Mammary epithelial cell (primary cell): ENCODE measurements at regions of chr9 and their contacts with region 1.

Region 1: DNA sequence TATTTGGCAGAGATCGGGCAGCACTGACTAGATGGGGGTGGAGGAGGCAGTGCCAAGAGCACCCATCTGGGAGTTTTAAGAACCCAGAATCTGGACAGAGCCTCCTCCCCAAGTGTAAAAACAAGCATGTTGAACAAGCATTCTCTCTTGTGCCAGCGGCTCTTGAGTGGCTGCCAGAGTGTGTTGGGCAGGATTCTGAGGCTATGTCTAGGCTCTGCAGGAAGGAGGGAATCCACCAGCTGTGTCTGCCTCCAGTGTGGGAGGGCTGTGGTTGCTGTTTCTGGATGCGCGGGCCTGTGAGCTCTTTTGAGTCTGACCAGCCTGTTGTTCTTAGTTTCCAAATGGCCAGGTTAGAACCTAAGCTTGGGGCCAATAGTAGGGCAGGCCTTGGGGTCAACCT is 39.8 kb downstream of the HMCN2 start:
- DNase-seq: no peak
- H3K4me3 ChIP-seq: no peak overlapping the region
- H3K27ac ChIP-seq: no peak overlapping the region
- H3K4me1 ChIP-seq: no peaks in the 10 kb centered on the region
- H3K27me3 ChIP-seq: no peaks in the 10 kb centered on the region
- CTCF ChIP-seq: no peak

Region 2: GRCh38 chr9:129868916-129869486 is 436.4 kb before region 1 on chr9:
- CTCF ChIA-PET with region 1: no interaction called
- dilution Hi-C with region 1: no loop called
- in situ Hi-C with region 1: no loop called
- intact Hi-C with region 1: no loop called
- DNase-seq: no peak
- H3K4me3 ChIP-seq: no peak overlapping the region
- H3K27ac ChIP-seq: no peak overlapping the region
- H3K4me1 ChIP-seq: no peaks in the 10 kb centered on the region
- H3K27me3 ChIP-seq: no peaks in the 10 kb centered on the region
- CTCF ChIP-seq: no peak

Region 3: GRCh38 chr9:130352081-130352480 is 46.7 kb after region 1 on chr9:
- CTCF ChIA-PET with region 1: no interaction called
- dilution Hi-C with region 1: loop called (anchors 5 kb)
- in situ Hi-C with region 1: no loop called
- intact Hi-C with region 1: no loop called
- DNase-seq: no peak
- H3K4me3 ChIP-seq: no peak overlapping the region
- H3K27ac ChIP-seq: no peak overlapping the region
- H3K4me1 ChIP-seq: no peaks in the 10 kb centered on the region
- H3K27me3 ChIP-seq: no peaks in the 10 kb centered on the region
- CTCF ChIP-seq: no peak

Region 4: GRCh38 chr9:130399768-130400167 is 94.4 kb after region 1 on chr9:
- CTCF ChIA-PET with region 1: no interaction called
- dilution Hi-C with region 1: loop called (anchors 5 kb)
- in situ Hi-C with region 1: no loop called
- intact Hi-C with region 1: no loop called
- DNase-seq: no peak
- H3K4me3 ChIP-seq: no peak overlapping the region
- H3K27ac ChIP-seq: no peak overlapping the region
- H3K4me1 ChIP-seq: no peaks in the 10 kb centered on the region
- H3K27me3 ChIP-seq: no peaks in the 10 kb centered on the region
- CTCF ChIP-seq: no peak

Region 5: DNA sequence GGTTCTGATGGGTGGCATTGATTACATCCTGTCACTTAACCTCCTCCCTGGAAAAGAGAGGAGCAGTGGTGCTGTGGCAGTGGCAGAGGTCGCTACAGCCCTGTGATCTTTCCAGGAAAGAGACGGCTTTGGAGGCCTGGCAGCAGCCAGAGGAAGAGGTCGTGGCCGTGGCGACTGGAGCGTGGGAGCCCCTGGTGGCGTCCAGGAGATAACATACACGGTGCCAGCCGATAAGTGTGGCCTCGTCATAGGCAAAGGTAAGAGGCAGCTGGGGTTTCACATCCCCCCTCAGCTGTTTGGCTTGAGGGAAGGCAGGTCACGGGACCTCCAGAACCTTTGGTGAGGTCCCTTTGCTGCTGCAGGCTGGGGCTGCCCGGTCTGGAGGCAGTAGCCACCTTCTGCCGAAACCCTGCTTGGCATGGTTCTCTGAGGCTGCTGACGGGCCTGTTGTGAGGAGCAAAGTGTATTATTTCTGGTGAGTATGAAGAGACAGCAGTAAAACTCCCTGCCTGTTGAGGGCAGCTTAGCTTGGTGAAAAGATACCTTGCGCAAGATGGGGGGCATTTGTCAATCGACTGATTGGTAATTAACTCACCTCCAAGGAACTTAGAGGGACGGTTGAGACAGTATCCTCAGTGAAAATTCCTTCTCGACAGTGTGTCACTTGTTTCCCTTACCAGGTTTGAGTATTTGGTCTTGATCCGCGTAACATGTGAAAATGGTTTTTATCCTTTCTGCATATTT is 321.0 kb after region 1 on chr9:
- CTCF ChIA-PET with region 1: no interaction called
- dilution Hi-C with region 1: no loop called
- in situ Hi-C with region 1: no loop called
- intact Hi-C with region 1: no loop called
- DNase-seq: no peak
- H3K4me3 ChIP-seq: no peak overlapping the region
- H3K27ac ChIP-seq: no peak overlapping the region
- H3K4me1 ChIP-seq: no peaks in the 10 kb centered on the region
- H3K27me3 ChIP-seq: no peaks in the 10 kb centered on the region
- CTCF ChIP-seq: no peak